B cell (primary cell): ENCODE measurements at regions of chr1 and their contacts with region 1.

Region 1: GRCh38 chr1:234881893-234882771 is 246.5 kb downstream of the TOMM20 start:
- DNase-seq: peak; percentile 20
- ATAC-seq: peak; percentile 8
- H3K4me3 ChIP-seq: no peak overlapping the region
- H3K4me3 Mint-ChIP-seq: peak overlapping the region; percentile 70
- H3K27ac ChIP-seq: no peak overlapping the region
- H3K27ac Mint-ChIP-seq: peak overlapping the region; percentile 66
- H3K4me1 ChIP-seq: peaks cover 14 to 20% of the 10 kb centered on the region in 2 donors
- H3K4me1 Mint-ChIP-seq: peaks cover 32% of the 10 kb centered on the region
- H3K27me3 ChIP-seq: no peaks in the 10 kb centered on the region
- H3K27me3 Mint-ChIP-seq: no peaks in the 10 kb centered on the region
- CTCF ChIP-seq: no peak

Region 2: GRCh38 chr1:234842726-234843641 is 39.1 kb before region 1 on chr1:
- CTCF ChIA-PET with region 1: no interaction called
- POLR2A ChIA-PET with region 1: no interaction called
- intact Hi-C with region 1: loop called (anchors 5 kb)
- DNase-seq: peak; percentile 49
- ATAC-seq: peak; percentile 65
- H3K4me3 ChIP-seq: no peak overlapping the region
- H3K4me3 Mint-ChIP-seq: peak overlapping the region; percentile 50
- H3K27ac ChIP-seq: no peak overlapping the region
- H3K27ac Mint-ChIP-seq: peak overlapping the region; percentile 11
- H3K4me1 ChIP-seq: peaks cover 25 to 33% of the 10 kb centered on the region in 2 donors
- H3K4me1 Mint-ChIP-seq: peaks cover 40% of the 10 kb centered on the region
- H3K27me3 ChIP-seq: no peaks in the 10 kb centered on the region
- H3K27me3 Mint-ChIP-seq: no peaks in the 10 kb centered on the region
- CTCF ChIP-seq: no peak

Region 3: GRCh38 chr1:234925440-234926263 is 43.5 kb after region 1 on chr1:
- CTCF ChIA-PET with region 1: interaction called, 3 read pairs
- POLR2A ChIA-PET with region 1: no interaction called
- intact Hi-C with region 1: loop called (anchors 5 kb)
- DNase-seq: no peak
- ATAC-seq: no peak
- H3K4me3 ChIP-seq: no peak overlapping the region
- H3K4me3 Mint-ChIP-seq: peak overlapping the region; percentile 81
- H3K27ac ChIP-seq: no peak overlapping the region
- H3K27ac Mint-ChIP-seq: peak overlapping the region; percentile 88
- H3K4me1 ChIP-seq: peaks cover 28 to 41% of the 10 kb centered on the region in 2 donors
- H3K4me1 Mint-ChIP-seq: peaks cover 31% of the 10 kb centered on the region
- H3K27me3 ChIP-seq: no peaks in the 10 kb centered on the region
- H3K27me3 Mint-ChIP-seq: no peaks in the 10 kb centered on the region
- CTCF ChIP-seq: no peak

Region 4: GRCh38 chr1:235011599-235012435 is 129.7 kb after region 1 on chr1:
- CTCF ChIA-PET with region 1: no interaction called
- POLR2A ChIA-PET with region 1: no interaction called
- intact Hi-C with region 1: loop called (anchors 1 kb)
- DNase-seq: peak; percentile 97
- ATAC-seq: peak; percentile 87
- H3K4me3 ChIP-seq: peak overlapping the region; percentile 23 to 52 (median 32)
- H3K4me3 Mint-ChIP-seq: peak overlapping the region; percentile 76
- H3K27ac ChIP-seq: peak overlapping the region; percentile 89 to 96
- H3K27ac Mint-ChIP-seq: peak overlapping the region; percentile 96
- H3K4me1 ChIP-seq: peaks cover 50 to 65% of the 10 kb centered on the region in 2 donors
- H3K4me1 Mint-ChIP-seq: peaks cover 82% of the 10 kb centered on the region
- H3K27me3 ChIP-seq: no peaks in the 10 kb centered on the region
- H3K27me3 Mint-ChIP-seq: no peaks in the 10 kb centered on the region
- CTCF ChIP-seq: no peak